ENCODE measurements at regions of chr1 and their contacts with region 1.

Region 1: GRCh38 chr1:2525920-2526823 is at the start of gene PANK4:
- DNase-seq: no peak
- ATAC-seq: peak; percentile 89
- H3K4me3 ChIP-seq: peak within 1 kb of the TSS; percentile 98
- H3K27ac ChIP-seq: peak within 1 kb of the TSS; percentile 47
- H3K4me1 ChIP-seq: peaks cover 25% of the 10 kb centered on the region
- H3K27me3 ChIP-seq: peaks cover 4 to 14% of the 10 kb centered on the region in 2 experiments; a peak in 3 of 4 replicates
- CTCF ChIP-seq: no peak
- EP300 ChIP-seq: no peak
- POLR2A ChIP-seq: peak; percentile 91
- RAD21 ChIP-seq: no peak
- polyA plus RNA-seq, gene PANK4: 0.35 to 1.5 TPM

Region 2: GRCh38 chr1:2205191-2205952 is 320.8 kb before region 1 on chr1:
- CTCF ChIA-PET with region 1: no interaction called
- POLR2A ChIA-PET with region 1: no interaction called
- RAD21 ChIA-PET with region 1: no interaction called
- SMC1A ChIA-PET with region 1: no interaction called
- in situ Hi-C with region 1: loop called (anchors 10 kb)
- intact Hi-C with region 1: no loop called
- DNase-seq: peak; percentile 33
- ATAC-seq: peak; percentile 90
- H3K4me3 ChIP-seq: peak overlapping the region; percentile 64; the same call in 1 of the 2 replicates
- H3K27ac ChIP-seq: no peak overlapping the region
- H3K4me1 ChIP-seq: peaks cover 4% of the 10 kb centered on the region
- H3K27me3 ChIP-seq: no peaks in the 10 kb centered on the region; a peak in 1 of 4 replicates
- CTCF ChIP-seq: no peak
- EP300 ChIP-seq: no peak
- POLR2A ChIP-seq: peak; percentile 51
- RAD21 ChIP-seq: no peak

Region 3: GRCh38 chr1:2290595-2291510 is 235.3 kb before region 1 on chr1:
- CTCF ChIA-PET with region 1: no interaction called
- POLR2A ChIA-PET with region 1: no interaction called
- RAD21 ChIA-PET with region 1: no interaction called
- SMC1A ChIA-PET with region 1: no interaction called
- in situ Hi-C with region 1: no loop called
- intact Hi-C with region 1: no loop called
- DNase-seq: peak; percentile 50
- ATAC-seq: peak; percentile 91
- H3K4me3 ChIP-seq: peak overlapping the region; percentile 59
- H3K27ac ChIP-seq: no peak overlapping the region
- H3K4me1 ChIP-seq: peaks cover 23% of the 10 kb centered on the region
- H3K27me3 ChIP-seq: no peaks in the 10 kb centered on the region
- CTCF ChIP-seq: no peak
- EP300 ChIP-seq: peak in 1 of 2 experiments; percentile 56; a peak in 1 of 4 replicates
- POLR2A ChIP-seq: no peak
- RAD21 ChIP-seq: no peak

Region 4: GRCh38 chr1:2412519-2413233 is 113.5 kb before region 1 on chr1 and contains the start of gene PEX10:
- CTCF ChIA-PET with region 1: interaction called, 17 read pairs
- POLR2A ChIA-PET with region 1: interaction called, 6 read pairs
- RAD21 ChIA-PET with region 1: interaction called, 13 read pairs
- SMC1A ChIA-PET with region 1: interaction called, 11 read pairs
- in situ Hi-C with region 1: no loop called
- intact Hi-C with region 1: loop called (anchors 2 kb)
- DNase-seq: peak; percentile 80
- ATAC-seq: peak; percentile 88
- H3K4me3 ChIP-seq: peak within 1 kb of the TSS; percentile 98
- H3K27ac ChIP-seq: peak within 1 kb of the TSS; percentile 62
- H3K4me1 ChIP-seq: peaks cover 27% of the 10 kb centered on the region
- H3K27me3 ChIP-seq: no peaks in the 10 kb centered on the region
- CTCF ChIP-seq: no peak
- EP300 ChIP-seq: no peak
- POLR2A ChIP-seq: peak; percentile 87
- RAD21 ChIP-seq: no peak
- polyA plus RNA-seq, gene PEX10: 0.24 TPM in 1 of 2 experiments, not detected in the other

Region 5: DNA sequence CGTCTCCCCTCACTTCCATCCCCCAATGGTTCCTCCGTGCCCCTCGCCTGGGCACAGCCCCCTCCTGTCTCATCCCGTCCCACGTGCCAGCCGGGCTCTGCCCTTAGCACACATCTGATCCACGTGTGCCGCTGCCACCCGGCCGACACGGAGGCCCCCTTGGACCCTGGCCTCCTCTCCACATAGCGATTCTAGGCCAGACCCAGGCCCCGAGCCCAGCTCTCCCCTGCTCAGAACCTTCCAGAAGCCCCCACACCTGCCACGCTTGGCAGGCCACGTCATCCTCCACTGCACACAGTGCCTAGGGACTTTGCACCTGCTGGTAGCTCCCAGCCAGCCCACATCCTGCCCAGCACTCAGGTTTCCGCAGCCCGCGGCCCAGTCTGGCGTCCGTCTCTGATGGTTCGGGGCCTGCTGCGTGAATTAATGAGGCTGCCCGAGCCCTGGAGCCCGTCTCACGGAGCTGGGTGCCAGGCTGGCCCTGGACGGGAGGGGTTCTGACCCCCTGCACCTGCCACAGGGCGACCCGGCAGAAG is 30.0 kb before region 1 on chr1:
- CTCF ChIA-PET with region 1: interaction called, 8 read pairs
- POLR2A ChIA-PET with region 1: no interaction called
- RAD21 ChIA-PET with region 1: interaction called, 11 read pairs
- SMC1A ChIA-PET with region 1: interaction called, 4 read pairs
- in situ Hi-C with region 1: no loop called
- intact Hi-C with region 1: no loop called
- DNase-seq: peak; percentile 25
- ATAC-seq: peak; percentile 86
- H3K4me3 ChIP-seq: no peak overlapping the region
- H3K27ac ChIP-seq: no peak overlapping the region
- H3K4me1 ChIP-seq: peaks cover 10% of the 10 kb centered on the region
- H3K27me3 ChIP-seq: no peaks in the 10 kb centered on the region
- CTCF ChIP-seq: no peak
- EP300 ChIP-seq: peak in 1 of 2 experiments; percentile 43; a peak in 1 of 4 replicates
- POLR2A ChIP-seq: no peak
- RAD21 ChIP-seq: no peak

Region 6: GRCh38 chr1:2556277-2556677 is 30.1 kb after region 1 on chr1 and contains the start of gene TNFRSF14:
- CTCF ChIA-PET with region 1: interaction called, 3 read pairs
- POLR2A ChIA-PET with region 1: no interaction called
- RAD21 ChIA-PET with region 1: interaction called, 15 read pairs
- SMC1A ChIA-PET with region 1: no interaction called
- in situ Hi-C with region 1: no loop called
- intact Hi-C with region 1: no loop called
- DNase-seq: no peak
- ATAC-seq: peak; percentile 73
- H3K4me3 ChIP-seq: peak within 1 kb of the TSS; percentile 87
- H3K27ac ChIP-seq: peak within 1 kb of the TSS; percentile 99
- H3K4me1 ChIP-seq: peaks cover 25% of the 10 kb centered on the region
- H3K27me3 ChIP-seq: no peaks in the 10 kb centered on the region
- CTCF ChIP-seq: peak in 2 of 3 experiments; percentile 12 to 13; a peak in 2 of 6 replicates
- EP300 ChIP-seq: no peak; a peak in 1 of 4 replicates
- POLR2A ChIP-seq: peak; percentile 77
- RAD21 ChIP-seq: no peak
- polyA plus RNA-seq, gene TNFRSF14: 0.43 to 2.9 TPM

Region 7: DNA sequence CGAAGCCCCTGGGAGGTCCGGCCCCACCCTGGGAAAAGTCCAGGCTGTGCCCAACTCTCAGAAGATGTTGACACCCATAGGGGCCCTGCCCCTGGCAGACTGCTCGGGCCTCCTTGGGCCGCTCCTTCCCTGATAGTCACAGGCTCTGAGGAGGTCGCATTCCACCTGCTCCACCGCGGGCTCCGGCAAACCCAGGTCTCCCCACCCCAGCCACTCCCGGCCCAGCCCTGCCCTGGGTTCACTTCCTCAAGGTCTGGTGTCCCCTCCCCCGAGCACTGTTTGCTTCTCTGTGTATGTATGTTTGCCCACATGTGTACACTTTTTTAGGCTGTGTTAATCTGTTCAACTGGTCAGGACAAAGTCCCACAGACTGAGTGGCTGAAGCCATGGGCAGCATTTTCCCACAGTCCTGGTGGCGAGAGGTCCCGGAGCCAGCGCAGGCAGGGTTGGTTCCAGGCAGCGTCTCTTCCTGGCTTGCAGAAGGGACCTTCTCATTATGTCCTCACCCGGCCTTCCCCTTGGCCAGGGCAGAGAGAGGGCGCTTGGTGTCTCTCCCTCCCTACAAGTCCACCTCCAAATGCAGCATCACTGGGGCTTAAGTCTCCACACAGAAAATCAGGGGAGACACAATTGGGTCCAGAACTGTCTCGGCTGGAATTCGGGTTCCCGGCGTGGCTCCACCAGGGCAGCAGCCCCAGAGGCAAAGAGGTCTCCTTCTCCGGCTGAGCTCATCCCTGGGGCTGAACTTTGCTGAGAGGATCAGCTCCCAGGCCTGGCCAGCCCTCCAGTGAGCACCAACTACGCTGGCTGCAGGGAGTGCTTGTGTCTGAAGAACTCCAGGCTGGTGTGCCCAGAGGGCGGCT is 49.9 kb after region 1 on chr1:
- CTCF ChIA-PET with region 1: no interaction called
- POLR2A ChIA-PET with region 1: interaction called, 18 read pairs
- RAD21 ChIA-PET with region 1: interaction called, 4 read pairs
- SMC1A ChIA-PET with region 1: interaction called, 3 read pairs
- in situ Hi-C with region 1: no loop called
- intact Hi-C with region 1: no loop called
- DNase-seq: no peak
- ATAC-seq: no peak; the same call in 2 of the 3 replicates
- H3K4me3 ChIP-seq: peak overlapping the region; percentile 59; the same call in 1 of the 2 replicates
- H3K27ac ChIP-seq: peak overlapping the region; percentile 99
- H3K4me1 ChIP-seq: peaks cover 46% of the 10 kb centered on the region
- H3K27me3 ChIP-seq: no peaks in the 10 kb centered on the region
- CTCF ChIP-seq: no peak
- EP300 ChIP-seq: no peak
- POLR2A ChIP-seq: no peak; the same call in 1 of the 2 replicates
- RAD21 ChIP-seq: no peak